OCI-LY7 (cell line): ENCODE measurements at regions of chr22 and their contacts with region 1.

Region 1: GRCh38 chr22:23913661-23914353 is 19.6 kb downstream of the MIF start:
- DNase-seq: peak; percentile 99
- H3K4me3 ChIP-seq: peak overlapping the region; percentile 74
- H3K27ac ChIP-seq: peak overlapping the region; percentile 85
- H3K4me1 ChIP-seq: peaks cover 63% of the 10 kb centered on the region
- CTCF ChIP-seq: no peak

Region 2: DNA sequence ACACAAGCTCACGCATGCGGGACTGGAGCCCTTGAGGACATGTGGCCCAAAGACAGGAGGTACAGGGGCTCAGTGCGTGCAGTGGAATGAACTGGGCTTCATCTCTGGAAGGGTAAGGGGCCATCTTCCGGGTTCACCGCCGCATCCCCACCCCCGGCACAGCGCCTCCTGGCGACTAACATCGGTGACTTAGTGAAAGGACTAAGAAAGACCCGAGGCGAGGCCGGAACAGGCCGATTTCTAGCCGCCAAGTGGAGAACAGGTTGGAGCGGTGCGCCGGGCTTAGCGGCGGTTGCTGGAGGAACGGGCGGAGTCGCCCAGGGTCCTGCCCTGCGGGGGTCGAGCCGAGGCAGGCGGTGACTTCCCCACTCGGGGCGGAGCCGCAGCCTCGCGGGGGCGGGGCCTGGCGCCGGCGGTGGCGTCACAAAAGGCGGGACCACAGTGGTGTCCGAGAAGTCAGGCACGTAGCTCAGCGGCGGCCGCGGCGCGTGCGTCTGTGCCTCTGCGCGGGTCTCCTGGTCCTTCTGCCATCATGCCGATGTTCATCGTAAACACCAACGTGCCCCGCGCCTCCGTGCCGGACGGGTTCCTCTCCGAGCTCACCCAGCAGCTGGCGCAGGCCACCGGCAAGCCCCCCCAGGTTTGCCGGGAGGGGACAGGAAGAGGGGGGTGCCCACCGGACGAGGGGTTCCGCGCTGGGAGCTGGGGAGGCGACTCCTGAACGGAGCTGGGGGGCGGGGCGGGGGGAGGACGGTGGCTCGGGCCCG is 19.7 kb before region 1 on chr22 and contains the start of gene MIF:
- CTCF ChIA-PET with region 1: interaction called, 5 read pairs
- POLR2A ChIA-PET with region 1: interaction called, 43 read pairs
- intact Hi-C with region 1: no loop called
- DNase-seq: peak; percentile 98
- H3K4me3 ChIP-seq: peak within 1 kb of the TSS; percentile 87
- H3K27ac ChIP-seq: peak within 1 kb of the TSS; percentile 90
- H3K4me1 ChIP-seq: peaks cover 25% of the 10 kb centered on the region
- CTCF ChIP-seq: peak; percentile 92
- total RNA-seq, gene MIF: 861 and 1,440 TPM in 2 replicates

Region 3: GRCh38 chr22:23925020-23925606 is 11.3 kb after region 1 on chr22:
- CTCF ChIA-PET with region 1: interaction called, 8 read pairs
- POLR2A ChIA-PET with region 1: interaction called, 6 read pairs
- intact Hi-C with region 1: loop called (anchors 2 kb)
- DNase-seq: no peak
- H3K4me3 ChIP-seq: no peak overlapping the region
- H3K27ac ChIP-seq: no peak overlapping the region
- H3K4me1 ChIP-seq: peaks cover 21% of the 10 kb centered on the region
- CTCF ChIP-seq: no peak

Region 4: DNA sequence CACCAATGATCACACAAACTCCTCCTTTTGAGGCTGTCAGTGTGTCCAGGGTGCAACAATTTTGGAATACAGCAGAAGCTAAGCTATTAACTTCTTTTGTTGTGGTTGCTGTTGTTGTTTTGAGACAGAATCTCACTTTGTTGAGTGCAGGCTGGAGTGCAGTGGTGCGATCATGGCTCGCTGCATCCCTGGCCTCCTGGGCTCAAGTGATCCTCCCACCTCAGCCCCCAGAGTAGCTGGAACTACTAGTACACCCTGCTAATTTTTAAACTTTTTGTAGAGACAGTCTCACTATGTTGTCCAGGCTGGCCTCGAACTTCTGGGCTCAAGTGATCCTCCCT is 25.2 kb after region 1 on chr22:
- CTCF ChIA-PET with region 1: no interaction called
- POLR2A ChIA-PET with region 1: no interaction called
- intact Hi-C with region 1: no loop called
- DNase-seq: no peak
- H3K4me3 ChIP-seq: no peak overlapping the region
- H3K27ac ChIP-seq: no peak overlapping the region
- H3K4me1 ChIP-seq: no peaks in the 10 kb centered on the region
- CTCF ChIP-seq: no peak